Activated B cell treated with CpG ODN at 0.5 μM for 24 hours (primary cell): ENCODE measurements at regions of chr17 and their contacts with region 1.

Region 1: GRCh38 chr17:76191896-76192295 is 48.4 kb downstream of the RNF157 start:
- DNase-seq: no peak
- ATAC-seq: peak; percentile 80
- H3K4me3 Mint-ChIP-seq: peak overlapping the region; percentile 38
- H3K27ac Mint-ChIP-seq: peak overlapping the region; percentile 69
- H3K4me1 Mint-ChIP-seq: peaks cover 41% of the 10 kb centered on the region
- H3K27me3 Mint-ChIP-seq: no peaks in the 10 kb centered on the region
- CTCF ChIP-seq: no peak

Region 2: DNA sequence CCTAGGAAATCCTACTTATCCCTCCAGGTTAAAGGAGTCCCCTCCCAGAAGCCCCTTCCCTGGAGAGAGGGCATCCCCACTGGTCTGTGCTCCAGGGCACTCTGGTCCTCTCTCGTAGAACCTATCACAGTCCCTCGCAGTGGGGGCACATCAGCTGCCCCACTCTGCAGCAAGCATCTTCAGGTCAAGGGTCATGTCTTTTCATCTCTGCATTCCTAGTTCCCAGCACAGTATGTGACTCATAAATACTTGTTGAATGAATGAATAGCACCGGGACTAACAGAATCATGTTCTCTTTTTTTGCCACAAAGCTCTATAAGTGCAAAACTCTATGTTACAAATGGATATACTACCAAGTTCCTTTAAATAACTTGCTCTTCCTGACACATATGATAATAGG is 12.4 kb after region 1 on chr17:
- CTCF ChIA-PET with region 1: no interaction called
- POLR2A ChIA-PET with region 1: interaction called, 13 read pairs
- intact Hi-C with region 1: no loop called
- DNase-seq: no peak
- ATAC-seq: no peak
- H3K4me3 Mint-ChIP-seq: no peak overlapping the region
- H3K27ac Mint-ChIP-seq: no peak overlapping the region
- H3K4me1 Mint-ChIP-seq: peaks cover 17% of the 10 kb centered on the region
- H3K27me3 Mint-ChIP-seq: no peaks in the 10 kb centered on the region
- CTCF ChIP-seq: no peak

Region 3: GRCh38 chr17:76240461-76241203 is 48.7 kb after region 1 on chr17 and contains the start of gene RNF157:
- CTCF ChIA-PET with region 1: no interaction called
- POLR2A ChIA-PET with region 1: interaction called, 10 read pairs
- intact Hi-C with region 1: loop called (anchors 5 kb)
- DNase-seq: peak; percentile 62
- ATAC-seq: peak; percentile 93
- H3K4me3 Mint-ChIP-seq: peak within 1 kb of the TSS; percentile 87
- H3K27ac Mint-ChIP-seq: peak within 1 kb of the TSS; percentile 56
- H3K4me1 Mint-ChIP-seq: peaks cover 12% of the 10 kb centered on the region
- H3K27me3 Mint-ChIP-seq: peaks cover 33% of the 10 kb centered on the region
- CTCF ChIP-seq: no peak
- total RNA-seq, gene RNF157: 3.1 and 3.5 TPM in 2 replicates

Region 4: GRCh38 chr17:76246080-76247066 is 54.5 kb after region 1 on chr17:
- CTCF ChIA-PET with region 1: no interaction called
- POLR2A ChIA-PET with region 1: interaction called, 10 read pairs
- intact Hi-C with region 1: no loop called
- DNase-seq: no peak
- ATAC-seq: peak; percentile 98
- H3K4me3 Mint-ChIP-seq: peak overlapping the region; percentile 56
- H3K27ac Mint-ChIP-seq: peak overlapping the region; percentile 73
- H3K4me1 Mint-ChIP-seq: peaks cover 24% of the 10 kb centered on the region
- H3K27me3 Mint-ChIP-seq: peaks cover 28% of the 10 kb centered on the region
- CTCF ChIP-seq: no peak